ENCODE measurements at regions of chr5 and their contacts with region 1.

Region 1: GRCh38 chr5:128213340-128213739 is 129.8 kb downstream of the SLC12A2 start:
- DNase-seq: peak; percentile 63
- ATAC-seq: no peak
- H3K4me3 Mint-ChIP-seq: no peak overlapping the region
- H3K27ac Mint-ChIP-seq: no peak overlapping the region
- H3K4me1 Mint-ChIP-seq: no peaks in the 10 kb centered on the region
- H3K27me3 Mint-ChIP-seq: peaks cover 2% of the 10 kb centered on the region
- CTCF ChIP-seq: peak; percentile 70

Region 2: GRCh38 chr5:128315671-128316070 is 102.3 kb after region 1 on chr5:
- CTCF ChIA-PET with region 1: no interaction called
- POLR2A ChIA-PET with region 1: no interaction called
- intact Hi-C with region 1: no loop called
- DNase-seq: no peak
- ATAC-seq: no peak
- H3K4me3 Mint-ChIP-seq: no peak overlapping the region
- H3K27ac Mint-ChIP-seq: no peak overlapping the region
- H3K4me1 Mint-ChIP-seq: no peaks in the 10 kb centered on the region
- H3K27me3 Mint-ChIP-seq: no peaks in the 10 kb centered on the region
- CTCF ChIP-seq: no peak

Region 3: GRCh38 chr5:128349044-128349858 is 135.9 kb after region 1 on chr5:
- CTCF ChIA-PET with region 1: no interaction called
- POLR2A ChIA-PET with region 1: no interaction called
- intact Hi-C with region 1: no loop called
- DNase-seq: no peak
- ATAC-seq: no peak
- H3K4me3 Mint-ChIP-seq: no peak overlapping the region
- H3K27ac Mint-ChIP-seq: no peak overlapping the region
- H3K4me1 Mint-ChIP-seq: no peaks in the 10 kb centered on the region
- H3K27me3 Mint-ChIP-seq: no peaks in the 10 kb centered on the region
- CTCF ChIP-seq: no peak

Region 4: GRCh38 chr5:128498844-128499455 is 285.6 kb after region 1 on chr5:
- CTCF ChIA-PET with region 1: interaction called, 4 read pairs
- POLR2A ChIA-PET with region 1: no interaction called
- intact Hi-C with region 1: loop called (anchors 5 kb)
- DNase-seq: no peak
- ATAC-seq: no peak
- H3K4me3 Mint-ChIP-seq: no peak overlapping the region
- H3K27ac Mint-ChIP-seq: no peak overlapping the region
- H3K4me1 Mint-ChIP-seq: no peaks in the 10 kb centered on the region
- H3K27me3 Mint-ChIP-seq: no peaks in the 10 kb centered on the region
- CTCF ChIP-seq: peak; percentile 21

Region 5: GRCh38 chr5:128674825-128675446 is 461.6 kb after region 1 on chr5:
- CTCF ChIA-PET with region 1: interaction called, 22 read pairs
- POLR2A ChIA-PET with region 1: no interaction called
- intact Hi-C with region 1: loop called (anchors 1 kb)
- DNase-seq: peak; percentile 66
- ATAC-seq: peak; percentile 65
- H3K4me3 Mint-ChIP-seq: no peak overlapping the region
- H3K27ac Mint-ChIP-seq: no peak overlapping the region
- H3K4me1 Mint-ChIP-seq: no peaks in the 10 kb centered on the region
- H3K27me3 Mint-ChIP-seq: no peaks in the 10 kb centered on the region
- CTCF ChIP-seq: peak; percentile 72

Region 6: DNA sequence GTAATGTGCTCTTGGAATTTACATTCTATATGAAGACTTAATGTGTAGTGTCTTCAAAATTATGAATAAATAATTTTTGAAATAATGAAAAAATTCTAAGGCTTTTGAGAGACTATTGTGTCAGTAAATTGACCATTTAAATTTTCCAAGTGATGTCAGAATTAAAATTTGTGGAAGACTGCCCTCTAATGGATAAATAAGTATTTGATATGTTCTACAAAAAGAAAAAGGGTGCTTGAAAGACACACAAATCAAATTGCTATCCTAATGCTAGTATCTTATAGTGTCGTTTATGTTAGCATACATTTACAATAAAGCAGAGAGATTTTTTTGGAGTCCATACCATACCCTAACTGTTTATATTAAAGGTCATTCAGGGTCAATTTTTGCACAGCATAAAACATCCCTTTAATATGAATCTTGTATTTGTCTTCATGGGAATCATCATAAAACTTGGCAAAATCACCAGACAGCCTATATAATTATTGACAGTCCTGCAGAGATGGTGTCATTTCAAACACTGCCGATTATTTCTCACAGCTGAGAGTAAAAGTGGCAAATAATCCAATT is 631.1 kb after region 1 on chr5:
- CTCF ChIA-PET with region 1: no interaction called
- POLR2A ChIA-PET with region 1: no interaction called
- intact Hi-C with region 1: loop called (anchors 10 kb)
- DNase-seq: no peak
- ATAC-seq: no peak
- H3K4me3 Mint-ChIP-seq: no peak overlapping the region
- H3K27ac Mint-ChIP-seq: no peak overlapping the region
- H3K4me1 Mint-ChIP-seq: no peaks in the 10 kb centered on the region
- H3K27me3 Mint-ChIP-seq: no peaks in the 10 kb centered on the region
- CTCF ChIP-seq: no peak

Measured in activated CD8-positive, alpha-beta T cell treated with anti-CD3 and anti-CD28 coated beads for 36 hours (primary cell).